CD4-positive, alpha-beta memory T cell (primary cell): ENCODE measurements at regions of chr6 and their contacts with region 1.

Region 1: GRCh38 chr6:159941286-159942113 is 27.4 kb upstream of the IGF2R start:
- DNase-seq: peak; percentile 50 to 66 (median 58)
- H3K4me3 ChIP-seq: no peak overlapping the region
- H3K4me3 Mint-ChIP-seq: no peak overlapping the region
- H3K27ac ChIP-seq: no peak overlapping the region
- H3K27ac Mint-ChIP-seq: no peak overlapping the region
- H3K4me1 ChIP-seq: no peaks in the 10 kb centered on the region
- H3K4me1 Mint-ChIP-seq: peaks cover 0 to 2% (median 0%) of the 10 kb centered on the region in 4 donors
- H3K27me3 ChIP-seq: no peaks in the 10 kb centered on the region
- H3K27me3 Mint-ChIP-seq: peaks cover 1 to 2% of the 10 kb centered on the region in 2 donors

Region 2: GRCh38 chr6:159174263-159174969 is 767.1 kb before region 1 on chr6:
- CTCF ChIA-PET with region 1: no interaction called
- POLR2A ChIA-PET with region 1: no interaction called
- intact Hi-C with region 1: loop called (anchors 1 kb)
- DNase-seq: peak; percentile 58 to 63 (median 61)
- H3K4me3 ChIP-seq: no peak overlapping the region
- H3K4me3 Mint-ChIP-seq: peak overlapping the region in 5 of 8 donors; percentile 12 to 62 (median 47)
- H3K27ac ChIP-seq: no peak overlapping the region
- H3K27ac Mint-ChIP-seq: peak overlapping the region in 2 of 7 donors; percentile 38 to 67
- H3K4me1 ChIP-seq: peaks cover 11% of the 10 kb centered on the region
- H3K4me1 Mint-ChIP-seq: peaks cover 7 to 17% (median 12%) of the 10 kb centered on the region in 4 donors
- H3K27me3 ChIP-seq: peaks cover 32% of the 10 kb centered on the region
- H3K27me3 Mint-ChIP-seq: peaks cover 31 to 49% of the 10 kb centered on the region in 2 donors

Region 3: GRCh38 chr6:159862103-159862502 is 79.4 kb before region 1 on chr6:
- CTCF ChIA-PET with region 1: interaction called, 13 read pairs
- POLR2A ChIA-PET with region 1: no interaction called
- intact Hi-C with region 1: loop called (anchors 1 kb)
- DNase-seq: peak in 4 of 5 donors; percentile 25 to 38 (median 32)
- H3K4me3 ChIP-seq: no peak overlapping the region
- H3K4me3 Mint-ChIP-seq: peak overlapping the region in 6 of 8 donors; percentile 1 to 53 (median 16)
- H3K27ac ChIP-seq: no peak overlapping the region
- H3K27ac Mint-ChIP-seq: peak overlapping the region; percentile 5 to 76 (median 62)
- H3K4me1 ChIP-seq: peaks cover 14% of the 10 kb centered on the region
- H3K4me1 Mint-ChIP-seq: peaks cover 10 to 17% (median 16%) of the 10 kb centered on the region in 4 donors
- H3K27me3 ChIP-seq: no peaks in the 10 kb centered on the region
- H3K27me3 Mint-ChIP-seq: peaks cover 7 to 8% of the 10 kb centered on the region in 2 donors

Region 4: DNA sequence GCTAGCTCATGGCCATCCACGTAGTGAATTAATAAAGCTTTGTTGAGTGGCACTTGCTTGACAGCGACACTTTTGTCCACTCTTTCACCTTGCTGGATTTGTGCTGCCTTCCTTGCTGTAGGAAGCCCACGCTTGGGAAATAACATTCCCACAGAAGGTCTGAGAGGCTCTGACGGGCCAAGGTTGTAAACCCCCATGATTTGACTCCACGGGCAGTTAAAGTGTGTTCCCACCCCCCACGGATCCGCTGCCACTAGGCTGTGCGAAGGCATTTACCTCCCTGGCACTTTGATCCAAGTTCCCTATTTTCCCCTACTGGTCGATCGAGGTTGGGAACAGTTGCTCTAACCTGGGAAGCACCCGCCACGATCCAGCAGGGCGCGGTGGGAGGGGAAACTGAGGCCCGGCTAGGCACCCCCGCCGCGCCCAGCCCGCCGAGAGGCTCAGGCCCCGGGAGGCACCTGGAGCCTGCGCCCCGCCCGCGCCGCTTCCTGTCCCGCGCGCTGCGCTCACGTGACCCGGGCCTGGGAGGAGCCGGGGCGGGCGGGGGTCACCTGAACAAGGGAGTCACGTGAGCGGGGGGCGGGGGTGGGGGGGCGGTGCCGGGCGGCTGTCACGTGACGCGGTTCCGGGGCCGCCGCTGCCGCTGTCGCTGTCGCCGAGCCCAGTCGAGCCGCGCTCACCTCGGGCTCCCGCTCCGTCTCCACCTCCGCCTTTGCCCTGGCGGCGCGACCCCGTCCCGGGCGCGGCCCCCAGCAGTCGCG is 27.1 kb after region 1 on chr6 and contains the start of gene IGF2R:
- CTCF ChIA-PET with region 1: no interaction called
- POLR2A ChIA-PET with region 1: no interaction called
- intact Hi-C with region 1: no loop called
- DNase-seq: peak; percentile 91 to 94 (median 92)
- H3K4me3 ChIP-seq: peak within 1 kb of the TSS; percentile 61 to 62
- H3K4me3 Mint-ChIP-seq: peak within 1 kb of the TSS; percentile 88 to 96 (median 94)
- H3K27ac ChIP-seq: peak within 1 kb of the TSS; percentile 75
- H3K27ac Mint-ChIP-seq: peak within 1 kb of the TSS; percentile 92 to 97 (median 94)
- H3K4me1 ChIP-seq: peaks cover 44% of the 10 kb centered on the region
- H3K4me1 Mint-ChIP-seq: peaks cover 29 to 45% (median 38%) of the 10 kb centered on the region in 4 donors
- H3K27me3 ChIP-seq: no peaks in the 10 kb centered on the region
- H3K27me3 Mint-ChIP-seq: no peaks in the 10 kb centered on the region
- total RNA-seq, gene IGF2R: 77.5 to 79.2 TPM

Region 5: GRCh38 chr6:159989492-159990480 is 48.3 kb after region 1 on chr6:
- CTCF ChIA-PET with region 1: no interaction called
- POLR2A ChIA-PET with region 1: no interaction called
- intact Hi-C with region 1: no loop called
- DNase-seq: no peak
- H3K4me3 ChIP-seq: no peak overlapping the region
- H3K4me3 Mint-ChIP-seq: peak overlapping the region in 1 of 8 donors; percentile 20
- H3K27ac ChIP-seq: no peak overlapping the region
- H3K27ac Mint-ChIP-seq: peak overlapping the region in 1 of 7 donors; percentile 25
- H3K4me1 ChIP-seq: peaks cover 60% of the 10 kb centered on the region
- H3K4me1 Mint-ChIP-seq: peaks cover 52 to 89% (median 72%) of the 10 kb centered on the region in 4 donors
- H3K27me3 ChIP-seq: no peaks in the 10 kb centered on the region
- H3K27me3 Mint-ChIP-seq: no peaks in the 10 kb centered on the region